Aorta (tissue), 5 donors: ENCODE measurements at regions of chr7 and their contacts with region 1.

Region 1: GRCh38 chr7:149090397-149091195 is at the start of gene ZNF786:
- DNase-seq: peak; percentile 93 to 96
- ATAC-seq: peak; percentile 100
- H3K4me3 ChIP-seq: peak within 1 kb of the TSS; percentile 43 to 52
- H3K27ac ChIP-seq: peak within 1 kb of the TSS; percentile 74 to 94
- H3K4me1 ChIP-seq: no peaks in the 10 kb centered on the region
- H3K27me3 ChIP-seq: no peaks in the 10 kb centered on the region
- total RNA-seq, gene ZNF786: 4.3 to 6.4 TPM

Region 2: DNA sequence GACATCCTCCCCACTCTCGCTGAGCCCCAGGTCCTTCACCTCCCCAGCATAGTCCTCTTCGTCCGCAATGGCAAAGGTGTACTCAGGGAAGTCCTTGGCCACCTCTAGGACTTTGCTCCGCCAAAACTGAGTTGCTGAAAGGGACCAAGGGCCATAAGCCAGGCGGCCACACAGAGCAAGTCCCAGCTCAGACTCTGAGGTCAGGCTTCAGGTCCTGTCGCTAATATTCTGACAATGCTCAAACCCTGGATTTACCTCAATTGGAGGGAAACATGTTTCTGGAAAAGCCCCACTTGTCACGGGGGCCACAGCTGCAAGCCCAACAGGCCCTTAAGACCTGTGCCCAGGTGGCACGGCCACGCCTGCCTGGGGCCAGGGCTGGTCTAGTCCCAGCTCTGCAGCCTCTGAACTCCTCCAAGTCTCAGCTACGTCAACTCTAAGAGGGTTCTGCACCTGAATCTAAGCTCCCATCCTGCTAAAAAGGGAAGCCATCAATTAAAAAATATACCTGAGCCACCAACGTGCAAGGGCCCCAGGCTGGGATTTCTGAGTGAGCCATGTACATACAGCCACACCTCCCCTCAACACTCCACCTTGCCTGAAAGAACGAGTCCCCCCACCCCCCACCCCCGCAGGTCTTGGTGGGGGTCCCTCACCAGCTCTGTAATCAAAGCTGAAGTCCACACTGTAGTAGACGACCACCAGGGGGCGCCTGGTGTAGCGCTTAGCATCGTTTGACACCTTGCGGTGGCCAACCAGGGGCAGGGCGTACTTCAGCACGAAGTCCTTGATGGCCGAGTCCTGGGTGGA is 85.2 kb before region 1 on chr7:
- intact Hi-C with region 1: loop called (anchors 1 to 5 kb)
- DNase-seq: peak; percentile 90 to 96
- ATAC-seq: peak; percentile 88
- H3K4me3 ChIP-seq: no peak overlapping the region
- H3K27ac ChIP-seq: no peak overlapping the region
- H3K4me1 ChIP-seq: no peaks in the 10 kb centered on the region
- H3K27me3 ChIP-seq: no peaks in the 10 kb centered on the region

Region 3: DNA sequence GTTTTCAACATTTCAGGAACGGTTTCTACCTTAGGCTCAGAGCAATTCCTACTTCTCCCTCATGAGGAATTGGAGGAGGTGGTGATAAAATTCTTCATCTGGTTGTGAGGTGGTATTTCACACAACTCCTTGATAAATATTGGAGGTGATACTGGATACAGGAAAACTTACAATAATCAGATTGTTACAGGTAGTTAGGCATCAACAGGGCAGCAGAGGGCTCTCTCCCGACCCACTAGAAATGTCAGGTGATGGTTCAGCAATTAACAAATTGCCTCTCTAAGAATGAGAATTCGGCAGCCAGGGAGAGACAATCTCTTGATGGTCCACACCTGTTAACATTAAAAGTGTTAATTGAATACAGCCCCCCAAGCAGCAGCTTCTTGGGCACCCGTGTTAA is 22.7 kb before region 1 on chr7:
- intact Hi-C with region 1: loop called in 1 of 2 experiments (anchors 1 kb)
- DNase-seq: no peak
- ATAC-seq: no peak
- H3K4me3 ChIP-seq: no peak overlapping the region
- H3K27ac ChIP-seq: no peak overlapping the region
- H3K4me1 ChIP-seq: no peaks in the 10 kb centered on the region
- H3K27me3 ChIP-seq: no peaks in the 10 kb centered on the region

Region 4: GRCh38 chr7:149125863-149126661 is 35.5 kb after region 1 on chr7 and contains the start of gene ZNF425:
- intact Hi-C with region 1: loop called in 1 of 2 experiments (anchors 1 kb)
- DNase-seq: peak; percentile 95 to 98
- ATAC-seq: peak; percentile 99
- H3K4me3 ChIP-seq: peak within 1 kb of the TSS; percentile 71 to 74
- H3K27ac ChIP-seq: peak within 1 kb of the TSS; percentile 62 to 70
- H3K4me1 ChIP-seq: no peaks in the 10 kb centered on the region
- H3K27me3 ChIP-seq: no peaks in the 10 kb centered on the region
- total RNA-seq, gene ZNF425: 1.0 to 1.3 TPM

Region 5: GRCh38 chr7:149300620-149301285 is 210.2 kb after region 1 on chr7:
- intact Hi-C with region 1: no loop called
- DNase-seq: no peak
- ATAC-seq: no peak
- H3K4me3 ChIP-seq: no peak overlapping the region
- H3K27ac ChIP-seq: no peak overlapping the region
- H3K4me1 ChIP-seq: no peaks in the 10 kb centered on the region
- H3K27me3 ChIP-seq: no peaks in the 10 kb centered on the region

Region 6: DNA sequence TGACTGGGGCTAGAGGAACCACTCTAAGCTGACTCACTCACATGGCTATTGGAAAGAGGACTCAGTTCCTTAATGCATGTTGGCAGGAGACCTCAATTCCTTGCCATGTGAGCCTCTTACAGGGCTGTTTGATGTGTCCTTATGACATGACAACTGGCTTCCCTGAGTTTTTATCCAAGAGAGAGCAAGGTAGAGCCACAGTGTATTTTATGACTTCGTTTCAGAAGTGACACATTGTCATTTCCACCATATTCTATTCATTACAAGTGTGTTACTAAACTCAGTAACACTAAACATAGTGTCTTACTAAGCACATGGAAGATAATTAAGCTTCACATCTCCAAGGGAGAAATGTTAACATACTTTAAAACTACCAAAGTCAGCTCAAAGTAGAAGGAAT is 272.1 kb after region 1 on chr7:
- intact Hi-C with region 1: no loop called
- DNase-seq: no peak
- ATAC-seq: no peak
- H3K4me3 ChIP-seq: no peak overlapping the region
- H3K27ac ChIP-seq: no peak overlapping the region
- H3K4me1 ChIP-seq: no peaks in the 10 kb centered on the region
- H3K27me3 ChIP-seq: no peaks in the 10 kb centered on the region